MCF 10A (cell line): ENCODE measurements at regions of chr16 and their contacts with region 1.

Region 1: DNA sequence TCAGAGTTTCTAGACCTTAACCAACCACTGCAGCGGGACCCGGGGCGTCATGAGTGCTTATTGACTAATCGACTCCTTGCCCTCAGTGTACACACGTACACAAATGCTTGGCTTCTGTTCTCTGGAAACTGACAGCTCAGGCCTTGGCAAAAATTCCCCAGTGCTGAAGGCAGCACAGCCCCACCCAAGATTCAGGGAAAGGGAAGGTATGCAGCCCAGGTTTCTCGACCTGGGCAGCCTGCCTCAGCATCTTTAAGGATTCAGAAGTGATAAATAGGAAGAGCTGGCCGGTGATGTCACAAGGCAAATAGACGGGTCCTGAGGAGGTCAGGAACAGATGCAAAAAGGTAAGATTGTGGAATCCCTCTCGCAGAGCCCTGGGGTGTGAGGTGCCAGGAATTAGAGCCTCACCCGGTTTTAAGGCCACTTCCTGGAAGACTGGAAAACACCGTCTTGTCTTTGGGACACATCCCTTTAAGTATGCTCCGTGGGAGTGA is 9.0 kb upstream of the CDH3 start:
- DNase-seq: peak; percentile 82
- H3K4me3 Mint-ChIP-seq: peak overlapping the region; percentile 26
- H3K27ac Mint-ChIP-seq: peak overlapping the region; percentile 76
- H3K4me1 Mint-ChIP-seq: peaks cover 19% of the 10 kb centered on the region
- H3K27me3 Mint-ChIP-seq: no peaks in the 10 kb centered on the region
- CTCF ChIP-seq: no peak

Region 2: GRCh38 chr16:68512183-68512582 is 123.9 kb before region 1 on chr16:
- CTCF ChIA-PET with region 1: no interaction called
- POLR2A ChIA-PET with region 1: no interaction called
- intact Hi-C with region 1: no loop called
- DNase-seq: no peak
- H3K4me3 Mint-ChIP-seq: no peak overlapping the region
- H3K27ac Mint-ChIP-seq: no peak overlapping the region
- H3K4me1 Mint-ChIP-seq: no peaks in the 10 kb centered on the region
- H3K27me3 Mint-ChIP-seq: peaks cover 28% of the 10 kb centered on the region
- CTCF ChIP-seq: no peak

Region 3: DNA sequence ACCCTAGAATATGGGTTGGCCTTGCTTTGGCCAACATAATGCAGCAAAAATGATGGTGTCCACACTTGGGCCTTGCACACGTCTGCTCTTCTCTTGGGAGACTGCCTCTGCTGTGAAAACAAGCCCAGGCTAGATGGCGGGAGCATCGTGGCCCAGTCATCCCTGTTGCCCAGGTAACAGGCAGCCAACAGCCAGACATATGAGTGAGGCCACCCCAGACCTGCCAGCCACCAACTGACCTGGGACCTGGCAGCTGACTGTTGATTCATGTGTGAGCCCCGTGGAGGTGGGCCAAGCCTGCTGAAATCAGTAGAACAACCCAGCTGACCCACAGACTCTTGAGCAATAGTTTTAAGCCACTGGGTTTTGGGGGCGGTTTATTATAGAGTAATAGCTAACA is 30.4 kb before region 1 on chr16:
- CTCF ChIA-PET with region 1: no interaction called
- POLR2A ChIA-PET with region 1: interaction called, 15 read pairs
- intact Hi-C with region 1: no loop called
- DNase-seq: peak; percentile 87
- H3K4me3 Mint-ChIP-seq: no peak overlapping the region
- H3K27ac Mint-ChIP-seq: peak overlapping the region; percentile 18
- H3K4me1 Mint-ChIP-seq: peaks cover 9% of the 10 kb centered on the region
- H3K27me3 Mint-ChIP-seq: no peaks in the 10 kb centered on the region
- CTCF ChIP-seq: no peak

Region 4: GRCh38 chr16:68658258-68659008 is 22.3 kb after region 1 on chr16:
- CTCF ChIA-PET with region 1: interaction called, 3 read pairs
- POLR2A ChIA-PET with region 1: interaction called, 39 read pairs
- intact Hi-C with region 1: no loop called
- DNase-seq: peak; percentile 98
- H3K4me3 Mint-ChIP-seq: peak overlapping the region; percentile 46
- H3K27ac Mint-ChIP-seq: peak overlapping the region; percentile 90
- H3K4me1 Mint-ChIP-seq: peaks cover 26% of the 10 kb centered on the region
- H3K27me3 Mint-ChIP-seq: no peaks in the 10 kb centered on the region
- CTCF ChIP-seq: no peak

Region 5: DNA sequence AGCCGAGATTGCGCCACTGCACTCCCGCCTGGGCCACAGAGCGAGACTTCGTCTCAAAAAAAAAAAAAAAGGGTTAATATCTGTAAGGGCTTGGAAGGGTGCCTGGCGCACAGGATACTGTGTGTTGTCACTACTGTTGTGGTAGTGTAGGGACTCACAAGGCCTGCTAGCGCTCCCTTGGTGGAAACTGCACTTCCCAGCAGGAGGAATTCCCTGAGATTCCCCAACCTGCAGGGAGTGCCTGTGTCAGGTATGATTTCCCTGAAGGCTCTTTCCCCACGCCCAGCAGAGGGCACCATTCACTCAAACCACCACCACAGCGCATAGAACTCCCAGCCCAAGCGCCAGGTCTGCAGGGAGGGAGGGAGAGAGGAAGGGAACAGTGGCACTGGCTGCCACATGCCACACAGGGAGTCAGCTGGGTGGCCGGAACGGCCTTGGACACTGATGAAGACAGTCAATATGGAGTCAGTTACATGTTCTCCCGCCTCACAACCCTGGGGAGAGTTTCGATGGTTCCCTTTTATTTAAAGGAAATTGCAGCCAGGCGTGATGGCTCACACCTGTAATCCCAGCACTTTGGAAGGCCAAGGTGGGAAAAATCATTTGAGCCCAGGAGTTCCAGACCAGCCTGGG is 68.2 kb after region 1 on chr16:
- CTCF ChIA-PET with region 1: no interaction called
- POLR2A ChIA-PET with region 1: no interaction called
- intact Hi-C with region 1: loop called (anchors 5 kb)
- DNase-seq: peak; percentile 92
- H3K4me3 Mint-ChIP-seq: no peak overlapping the region
- H3K27ac Mint-ChIP-seq: no peak overlapping the region
- H3K4me1 Mint-ChIP-seq: peaks cover 20% of the 10 kb centered on the region
- H3K27me3 Mint-ChIP-seq: no peaks in the 10 kb centered on the region
- CTCF ChIP-seq: peak; percentile 81

Region 6: DNA sequence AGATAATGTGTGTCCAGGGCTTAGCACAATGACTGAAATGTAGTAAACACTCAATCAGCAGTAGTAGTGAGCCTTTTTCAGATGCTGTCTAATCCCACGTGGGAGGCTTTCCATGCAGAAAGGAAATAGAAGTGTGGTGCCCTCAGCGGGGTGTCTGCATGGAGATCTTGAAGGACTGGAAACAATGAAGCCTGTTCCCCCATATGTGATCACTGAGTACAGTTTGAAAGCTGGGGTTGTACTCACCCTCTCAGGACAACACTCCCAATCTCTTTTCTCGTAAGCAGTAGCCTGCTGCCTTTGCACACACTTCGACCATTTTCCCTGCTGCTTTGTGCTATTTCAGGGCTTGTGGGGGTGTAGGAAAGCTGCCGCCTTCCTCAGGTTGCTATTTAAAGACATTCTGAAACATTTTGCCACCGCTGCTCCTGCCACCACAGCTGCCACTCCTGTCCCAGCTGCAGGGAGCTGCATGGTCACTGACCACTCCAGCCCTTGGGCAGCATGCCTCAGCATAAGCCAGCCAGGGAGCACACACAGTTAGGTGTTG is 428.7 kb after region 1 on chr16:
- CTCF ChIA-PET with region 1: no interaction called
- POLR2A ChIA-PET with region 1: no interaction called
- intact Hi-C with region 1: no loop called
- DNase-seq: no peak
- H3K4me3 Mint-ChIP-seq: no peak overlapping the region
- H3K27ac Mint-ChIP-seq: no peak overlapping the region
- H3K4me1 Mint-ChIP-seq: peaks cover 6% of the 10 kb centered on the region
- H3K27me3 Mint-ChIP-seq: no peaks in the 10 kb centered on the region
- CTCF ChIP-seq: no peak